Dorsolateral prefrontal cortex (tissue), 120 donors: ENCODE measurements at regions of chr9 and their contacts with region 1.

Region 1: GRCh38 chr9:34701769-34702736 is 7.9 kb downstream of the CCL21 start:
- DNase-seq: peak; percentile 80 to 87 (median 84)
- H3K4me3 ChIP-seq: peak overlapping the region; percentile 53 to 92 (median 75)
- H3K27ac ChIP-seq: peak overlapping the region in 57 of 59 donors; percentile 49 to 91 (median 81)
- H3K27me3 ChIP-seq: no peaks in the 10 kb centered on the region
- CTCF ChIP-seq: peak; percentile 90 to 100 (median 98)

Region 2: GRCh38 chr9:34197756-34198711 is 504.0 kb before region 1 on chr9:
- intact Hi-C with region 1: no loop called
- DNase-seq: no peak
- H3K4me3 ChIP-seq: no peak overlapping the region
- H3K27ac ChIP-seq: peak overlapping the region in 1 of 59 donors; percentile 1
- H3K27me3 ChIP-seq: no peaks in the 10 kb centered on the region
- CTCF ChIP-seq: no peak

Region 3: GRCh38 chr9:34646211-34647083 is 55.6 kb before region 1 on chr9 and contains the start of gene GALT:
- intact Hi-C with region 1: loop called (anchors 5 kb)
- DNase-seq: peak; percentile 81 to 93 (median 90)
- H3K4me3 ChIP-seq: peak within 1 kb of the TSS; percentile 51 to 96 (median 82)
- H3K27ac ChIP-seq: peak within 1 kb of the TSS; percentile 10 to 96 (median 85)
- H3K27me3 ChIP-seq: no peaks in the 10 kb centered on the region
- CTCF ChIP-seq: peak in 54 of 56 donors; percentile 14 to 72 (median 50)
- total RNA-seq, gene GALT: 42.5 to 97.3 (median 60.5) TPM

Region 4: DNA sequence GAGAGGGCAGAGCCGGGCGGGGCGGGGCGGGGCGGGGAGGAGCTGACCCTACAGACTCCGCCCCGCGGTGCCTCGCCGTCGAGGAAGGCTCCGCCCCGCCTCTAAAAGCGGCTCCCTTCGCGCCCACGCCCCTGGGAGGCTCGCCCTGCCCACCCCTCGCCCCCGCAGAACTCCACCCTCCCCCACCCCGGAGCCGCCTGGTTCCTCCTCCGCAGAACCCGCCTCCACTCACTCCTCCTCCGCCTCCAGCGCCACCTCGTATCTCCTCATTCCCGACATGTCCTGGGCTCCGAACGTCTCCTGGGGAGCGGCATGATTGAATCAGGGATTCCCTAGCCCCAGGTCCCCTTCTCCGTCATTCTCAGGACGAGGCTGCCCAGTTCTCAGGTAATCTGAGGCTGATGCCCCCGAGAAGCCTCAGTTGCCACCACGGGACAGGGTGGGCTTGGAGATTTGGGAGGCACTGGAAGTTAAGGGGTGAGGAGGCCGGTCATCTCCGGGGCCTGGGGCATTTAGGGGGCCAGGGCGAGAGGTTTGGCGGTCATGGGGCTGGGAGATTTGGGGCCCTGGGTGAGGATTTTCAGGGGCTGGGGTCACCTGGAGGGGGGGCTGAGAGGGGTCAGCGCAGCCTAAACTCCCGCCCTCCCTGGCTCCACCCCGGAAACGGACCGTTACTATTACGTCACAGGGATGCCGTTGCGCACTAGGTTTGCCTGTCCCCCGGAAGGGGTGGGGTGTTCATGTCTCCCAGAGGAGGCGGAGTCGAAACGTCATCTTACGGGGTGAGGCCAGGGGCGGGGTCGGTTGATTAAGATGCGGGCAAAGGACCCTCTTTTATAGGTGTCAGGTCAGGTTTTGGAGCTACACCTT is 36.4 kb before region 1 on chr9:
- intact Hi-C with region 1: loop called (anchors 2 to 5 kb)
- DNase-seq: peak; percentile 85 to 98 (median 96)
- H3K4me3 ChIP-seq: peak overlapping the region; percentile 35 to 94 (median 79)
- H3K27ac ChIP-seq: peak overlapping the region; percentile 58 to 99 (median 95)
- H3K27me3 ChIP-seq: no peaks in the 10 kb centered on the region
- CTCF ChIP-seq: peak in 28 of 56 donors; percentile 1 to 57 (median 28)

Region 5: DNA sequence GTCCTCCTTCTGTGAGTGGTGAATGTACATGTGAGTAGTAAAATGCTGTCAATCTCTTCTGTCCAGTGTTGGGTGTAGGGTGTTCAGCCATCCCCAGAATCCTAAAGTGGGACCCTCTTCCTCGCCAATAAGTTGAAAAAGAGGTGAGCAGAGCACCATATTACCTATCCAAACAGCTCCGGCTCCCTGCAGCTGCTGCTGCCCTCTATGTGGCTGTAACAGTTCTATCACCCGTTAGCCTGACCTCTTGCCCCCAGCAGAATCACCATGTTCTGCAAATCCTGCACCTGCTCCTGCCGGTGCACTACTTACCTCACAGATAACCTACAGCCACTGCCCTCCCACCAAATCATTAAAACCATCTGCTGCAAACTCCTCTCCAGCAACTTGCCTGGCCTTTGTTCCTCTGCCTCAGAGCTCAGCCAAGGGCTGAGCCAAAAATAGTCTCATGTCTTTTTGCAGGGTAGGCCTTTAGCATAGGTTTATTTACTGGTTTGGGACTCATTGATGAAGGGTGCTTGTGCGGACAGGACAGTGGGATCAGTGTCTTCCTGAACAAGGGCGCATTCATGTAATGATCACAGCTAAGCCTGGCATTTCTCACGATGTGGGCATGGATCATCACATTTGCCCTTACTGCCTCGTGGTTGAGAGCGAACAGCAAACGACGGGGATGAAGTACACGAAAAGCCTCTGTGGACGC is 57.5 kb after region 1 on chr9:
- intact Hi-C with region 1: loop called in 1 of 2 experiments (anchors 5 kb)
- DNase-seq: peak in 6 of 10 donors; percentile 30 to 65 (median 44)
- H3K4me3 ChIP-seq: peak overlapping the region in 2 of 59 donors; percentile 10 to 32
- H3K27ac ChIP-seq: peak overlapping the region in 24 of 59 donors; percentile 6 to 77 (median 47)
- H3K27me3 ChIP-seq: peaks cover 0 to 3% (median 0%) of the 10 kb centered on the region in 45 donors
- CTCF ChIP-seq: peak in 4 of 56 donors; percentile 7 to 12 (median 10)